T-cell (primary cell): ENCODE measurements at regions of chr9 and their contacts with region 1.

Region 1: GRCh38 chr9:112074250-112075008 is 100.7 kb downstream of the SUSD1 start:
- DNase-seq: peak; percentile 25 to 86 (median 62)
- ATAC-seq: peak; percentile 67 to 94 (median 83)
- H3K4me3 ChIP-seq: no peak overlapping the region
- H3K4me3 Mint-ChIP-seq: peak overlapping the region; percentile 45 to 74 (median 65)
- H3K27ac ChIP-seq: no peak overlapping the region
- H3K27ac Mint-ChIP-seq: peak overlapping the region; percentile 49 to 73
- H3K4me1 ChIP-seq: peaks cover 14% of the 10 kb centered on the region in 2 experiments
- H3K4me1 Mint-ChIP-seq: peaks cover 27 to 31% (median 30%) of the 10 kb centered on the region in 3 donors
- H3K27me3 ChIP-seq: no peaks in the 10 kb centered on the region
- H3K27me3 Mint-ChIP-seq: no peaks in the 10 kb centered on the region

Region 2: GRCh38 chr9:111759762-111760639 is 314.4 kb before region 1 on chr9:
- CTCF ChIA-PET with region 1: interaction called, 36 to 117 read pairs
- POLR2A ChIA-PET with region 1: interaction called, 4 to 9 read pairs
- DNase-seq: peak in 30 of 35 experiments; percentile 3 to 80 (median 36)
- ATAC-seq: peak in 3 of 4 experiments; percentile 70 to 75 (median 72)
- H3K4me3 ChIP-seq: no peak overlapping the region
- H3K4me3 Mint-ChIP-seq: no peak overlapping the region
- H3K27ac ChIP-seq: no peak overlapping the region
- H3K27ac Mint-ChIP-seq: no peak overlapping the region
- H3K4me1 ChIP-seq: peaks cover 0 to 2% of the 10 kb centered on the region in 2 experiments
- H3K4me1 Mint-ChIP-seq: peaks cover 4 to 7% (median 4%) of the 10 kb centered on the region in 3 donors
- H3K27me3 ChIP-seq: no peaks in the 10 kb centered on the region
- H3K27me3 Mint-ChIP-seq: no peaks in the 10 kb centered on the region